ENCODE measurements at regions of chr11 and their contacts with region 1.

Region 1: GRCh38 chr11:86663291-86663690 is 9.1 kb downstream of the ME3 start:
- DNase-seq: no peak
- H3K4me3 ChIP-seq: no peak overlapping the region
- H3K27me3 ChIP-seq: no peaks in the 10 kb centered on the region
- CTCF ChIP-seq: no peak

Region 2: GRCh38 chr11:86720546-86720945 is 57.3 kb after region 1 on chr11:
- CTCF ChIA-PET with region 1: interaction called, 10 read pairs
- POLR2A ChIA-PET with region 1: no interaction called
- DNase-seq: no peak
- H3K4me3 ChIP-seq: no peak overlapping the region
- H3K27me3 ChIP-seq: no peaks in the 10 kb centered on the region
- CTCF ChIP-seq: no peak

Measured in BJ (cell line).